ENCODE measurements at regions of chr2 and their contacts with region 1.

Region 1: GRCh38 chr2:138827426-138828054 is 47.4 kb upstream of the NXPH2 start:
- DNase-seq: peak; percentile 12
- ATAC-seq: peak; percentile 64
- H3K4me3 Mint-ChIP-seq: no peak overlapping the region
- H3K27ac Mint-ChIP-seq: no peak overlapping the region
- H3K4me1 Mint-ChIP-seq: no peaks in the 10 kb centered on the region
- H3K27me3 Mint-ChIP-seq: peaks cover 11% of the 10 kb centered on the region
- CTCF ChIP-seq: peak; percentile 83

Region 2: GRCh38 chr2:137865954-137866540 is 961.5 kb before region 1 on chr2:
- CTCF ChIA-PET with region 1: interaction called, 18 read pairs
- POLR2A ChIA-PET with region 1: no interaction called
- intact Hi-C with region 1: loop called (anchors 2 kb)
- DNase-seq: peak; percentile 72
- ATAC-seq: no peak
- H3K4me3 Mint-ChIP-seq: no peak overlapping the region
- H3K27ac Mint-ChIP-seq: no peak overlapping the region
- H3K4me1 Mint-ChIP-seq: no peaks in the 10 kb centered on the region
- H3K27me3 Mint-ChIP-seq: peaks cover 2% of the 10 kb centered on the region
- CTCF ChIP-seq: peak; percentile 63